ENCODE measurements at regions of chr1 and their contacts with region 1.

Region 1: GRCh38 chr1:904310-904950 is 19.3 kb upstream of the SAMD11 start:
- DNase-seq: peak; percentile 88
- H3K4me3 Mint-ChIP-seq: peak overlapping the region; percentile 60
- H3K27ac Mint-ChIP-seq: no peak overlapping the region
- H3K4me1 Mint-ChIP-seq: peaks cover 12% of the 10 kb centered on the region
- H3K27me3 Mint-ChIP-seq: peaks cover 78% of the 10 kb centered on the region

Region 2: DNA sequence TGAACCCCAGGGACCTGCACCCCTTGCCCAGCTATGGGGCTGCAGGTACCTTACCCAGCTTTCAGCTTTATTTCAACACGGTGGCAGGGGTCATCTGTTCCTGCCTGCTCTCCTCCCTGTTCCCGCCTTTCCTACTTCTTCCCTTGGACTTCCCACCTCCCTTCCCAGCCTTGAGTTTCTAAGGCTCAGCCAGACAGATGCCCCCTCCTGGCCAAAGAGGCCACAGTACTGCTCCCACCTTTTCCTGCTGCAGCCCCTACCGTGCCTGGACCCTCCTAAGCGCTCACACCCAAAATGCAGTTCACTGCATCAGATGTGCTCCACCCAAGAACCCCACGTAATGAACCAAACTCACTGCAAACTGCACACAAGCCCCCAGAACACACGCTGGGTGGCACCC is 46.9 kb after region 1 on chr1:
- CTCF ChIA-PET with region 1: no interaction called
- DNase-seq: no peak
- H3K4me3 Mint-ChIP-seq: no peak overlapping the region
- H3K27ac Mint-ChIP-seq: no peak overlapping the region
- H3K4me1 Mint-ChIP-seq: no peaks in the 10 kb centered on the region
- H3K27me3 Mint-ChIP-seq: no peaks in the 10 kb centered on the region

Region 3: DNA sequence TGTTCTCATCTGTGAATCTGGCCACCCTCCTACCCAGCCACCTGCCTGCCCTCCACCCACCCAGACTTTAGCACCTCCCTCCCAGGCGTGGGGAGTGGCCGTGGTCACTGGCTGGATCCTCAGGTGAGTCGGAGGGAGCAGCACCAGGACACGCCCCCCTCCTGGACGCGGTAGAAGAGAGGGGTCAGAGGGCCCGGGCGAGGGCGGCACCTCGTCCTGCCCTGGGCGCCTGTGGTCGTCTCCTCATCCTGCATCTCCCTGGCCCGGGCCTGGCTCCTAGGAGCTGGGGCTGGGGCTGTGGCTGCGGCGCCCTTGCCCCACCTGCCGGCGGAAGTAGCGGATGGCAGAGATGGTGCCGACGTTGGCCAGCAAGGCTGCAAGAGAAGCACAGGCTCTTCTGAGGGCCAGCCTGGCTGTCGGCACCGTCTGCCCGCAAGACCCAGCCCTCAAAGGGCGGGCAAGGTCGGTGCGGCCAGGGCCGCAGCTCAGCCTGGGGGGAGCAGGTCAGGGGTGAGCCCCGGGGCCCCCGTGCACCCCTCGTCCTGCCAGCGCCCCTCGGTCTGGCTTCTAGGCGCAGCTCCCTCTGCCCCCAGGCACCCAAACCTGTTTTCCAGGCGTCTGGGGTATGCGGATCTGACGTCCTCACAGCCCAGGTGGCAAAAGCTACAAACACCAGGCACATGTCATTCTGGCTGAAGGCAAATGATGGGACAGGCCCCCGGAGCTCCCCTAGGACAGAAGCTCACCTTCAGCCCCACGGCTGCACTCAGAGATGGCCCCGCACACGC is 71.7 kb after region 1 on chr1:
- CTCF ChIA-PET with region 1: interaction called, 17 read pairs
- DNase-seq: peak; percentile 82
- H3K4me3 Mint-ChIP-seq: no peak overlapping the region
- H3K27ac Mint-ChIP-seq: no peak overlapping the region
- H3K4me1 Mint-ChIP-seq: peaks cover 10% of the 10 kb centered on the region
- H3K27me3 Mint-ChIP-seq: peaks cover 49% of the 10 kb centered on the region